ENCODE measurements at regions of chr1 and their contacts with region 1.

Region 1: DNA sequence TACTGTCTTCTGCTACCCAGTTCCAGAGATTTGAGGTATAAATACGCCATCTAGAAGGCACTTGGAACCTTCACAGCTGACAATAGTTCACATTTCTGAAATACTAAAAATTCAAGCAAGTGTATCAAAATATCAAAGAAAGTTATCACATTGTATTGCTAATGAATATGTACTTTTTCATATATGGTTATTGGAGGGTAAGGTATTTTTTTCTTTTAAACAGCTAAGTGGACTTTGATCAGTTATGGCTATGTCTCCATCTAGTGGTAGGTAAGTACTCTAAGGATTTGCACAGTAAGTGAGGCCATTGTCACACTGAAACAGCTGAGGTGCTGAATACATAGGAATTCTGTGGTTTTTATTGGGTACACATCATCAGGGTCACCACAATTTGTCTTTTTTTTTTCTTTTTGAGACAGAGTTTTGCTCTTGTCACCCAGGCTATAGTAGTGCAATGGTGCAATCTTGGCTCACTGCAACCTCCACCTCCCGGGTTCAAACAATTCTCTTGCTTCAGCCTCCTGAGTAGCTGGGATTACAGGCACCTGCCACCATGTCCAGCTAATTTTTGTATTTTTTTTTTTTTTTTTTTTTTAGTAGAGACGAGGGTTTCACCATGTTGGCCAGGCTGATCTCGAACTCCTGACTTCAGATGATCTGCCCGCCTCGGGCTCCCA is 49.1 kb upstream of the CR2 start:
- DNase-seq: no peak
- ATAC-seq: peak; percentile 86
- H3K4me3 Mint-ChIP-seq: no peak overlapping the region
- H3K27ac Mint-ChIP-seq: no peak overlapping the region
- H3K4me1 Mint-ChIP-seq: peaks cover 20% of the 10 kb centered on the region
- H3K27me3 Mint-ChIP-seq: peaks cover 5% of the 10 kb centered on the region
- CTCF ChIP-seq: peak; percentile 87

Region 2: DNA sequence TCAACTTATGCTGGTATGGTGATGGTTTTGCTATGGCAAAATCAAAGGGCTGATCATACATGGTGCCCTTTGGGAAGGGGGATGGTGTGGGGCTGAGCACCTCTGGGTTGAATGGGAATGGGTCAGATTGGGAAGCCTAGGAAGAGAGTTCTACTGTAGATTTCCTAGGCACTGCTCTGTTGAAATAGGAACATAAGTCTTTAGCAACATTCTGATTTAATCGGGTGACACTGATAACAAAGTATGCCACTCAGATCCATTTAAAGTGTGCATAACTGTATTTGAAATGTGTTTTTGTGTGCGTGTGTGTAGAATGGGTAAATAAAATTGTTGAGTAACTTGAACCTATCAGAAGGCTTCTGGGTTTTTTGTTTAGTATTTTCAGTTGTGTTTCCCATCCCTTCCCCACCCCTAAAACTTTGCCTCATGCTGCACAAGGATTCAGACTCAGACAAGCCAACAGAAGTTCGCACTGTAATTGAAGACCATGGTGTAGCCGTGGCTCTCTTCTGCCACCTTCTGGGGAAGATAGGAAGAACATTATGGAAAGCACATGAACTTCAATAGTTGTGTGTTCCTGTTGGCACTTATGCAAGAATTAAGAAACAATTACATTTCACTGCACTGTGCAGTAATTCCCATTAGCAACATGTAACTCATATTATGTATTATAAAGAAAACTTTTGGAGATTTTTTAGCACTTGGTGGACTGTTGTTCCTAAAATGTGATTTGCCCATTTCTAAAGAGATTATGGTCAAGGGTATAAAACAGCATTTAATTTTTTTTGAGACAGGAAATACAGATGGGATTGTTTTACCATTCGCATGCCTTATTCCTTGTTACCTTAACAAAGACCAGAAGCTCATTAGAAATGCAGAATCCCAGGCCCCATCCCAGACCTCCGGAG is 327.3 kb before region 1 on chr1:
- CTCF ChIA-PET with region 1: interaction called, 38 read pairs
- POLR2A ChIA-PET with region 1: interaction called, 3 read pairs
- intact Hi-C with region 1: no loop called
- DNase-seq: peak; percentile 76
- ATAC-seq: peak; percentile 98
- H3K4me3 Mint-ChIP-seq: no peak overlapping the region
- H3K27ac Mint-ChIP-seq: no peak overlapping the region
- H3K4me1 Mint-ChIP-seq: no peaks in the 10 kb centered on the region
- H3K27me3 Mint-ChIP-seq: no peaks in the 10 kb centered on the region
- CTCF ChIP-seq: peak; percentile 90

Region 3: DNA sequence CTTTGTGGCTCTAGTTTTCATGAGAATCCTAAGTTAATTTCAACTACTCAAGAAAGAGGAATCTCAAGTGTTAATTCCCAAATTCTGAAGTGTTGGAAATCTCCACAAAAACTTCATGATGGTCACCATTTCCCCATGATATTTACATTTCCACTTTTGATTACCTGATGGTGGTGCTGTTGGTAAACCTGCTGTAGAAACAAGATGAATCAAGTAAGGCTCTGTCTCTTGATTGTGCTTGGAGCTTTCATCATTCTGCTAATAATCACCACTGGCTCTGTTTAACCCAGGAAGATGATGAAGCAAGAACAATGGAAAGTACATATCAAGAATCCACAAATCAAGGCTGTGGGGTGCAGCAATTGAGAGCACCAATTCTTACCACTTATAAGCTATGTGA is 223.1 kb before region 1 on chr1:
- CTCF ChIA-PET with region 1: interaction called, 3 read pairs
- POLR2A ChIA-PET with region 1: no interaction called
- intact Hi-C with region 1: loop called (anchors 10 kb)
- DNase-seq: no peak
- ATAC-seq: no peak
- H3K4me3 Mint-ChIP-seq: no peak overlapping the region
- H3K27ac Mint-ChIP-seq: no peak overlapping the region
- H3K4me1 Mint-ChIP-seq: no peaks in the 10 kb centered on the region
- H3K27me3 Mint-ChIP-seq: peaks cover 2% of the 10 kb centered on the region
- CTCF ChIP-seq: no peak

Region 4: DNA sequence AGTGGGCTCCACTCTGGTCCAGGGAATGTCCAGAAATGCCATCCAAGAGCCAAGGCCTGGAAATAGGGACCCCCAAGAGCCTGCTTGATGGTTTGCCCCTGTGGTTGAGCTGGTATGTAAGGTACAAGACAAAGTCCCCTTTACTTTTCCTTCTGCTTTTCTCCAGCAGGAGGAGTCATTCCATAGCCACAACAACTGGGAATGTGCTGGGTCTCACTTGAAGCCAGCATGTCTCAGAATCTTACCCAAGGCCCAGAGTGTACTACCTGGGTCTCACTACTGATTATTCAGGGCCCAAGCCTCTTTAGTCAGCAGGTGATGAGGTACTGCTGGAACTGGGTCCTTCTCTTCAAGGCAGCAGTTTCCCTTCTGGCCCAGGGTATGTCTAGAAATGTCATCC is 145.6 kb before region 1 on chr1:
- CTCF ChIA-PET with region 1: no interaction called
- POLR2A ChIA-PET with region 1: no interaction called
- intact Hi-C with region 1: no loop called
- DNase-seq: no peak
- ATAC-seq: no peak
- H3K4me3 Mint-ChIP-seq: no peak overlapping the region
- H3K27ac Mint-ChIP-seq: no peak overlapping the region
- H3K4me1 Mint-ChIP-seq: no peaks in the 10 kb centered on the region
- H3K27me3 Mint-ChIP-seq: no peaks in the 10 kb centered on the region
- CTCF ChIP-seq: no peak

Region 5: DNA sequence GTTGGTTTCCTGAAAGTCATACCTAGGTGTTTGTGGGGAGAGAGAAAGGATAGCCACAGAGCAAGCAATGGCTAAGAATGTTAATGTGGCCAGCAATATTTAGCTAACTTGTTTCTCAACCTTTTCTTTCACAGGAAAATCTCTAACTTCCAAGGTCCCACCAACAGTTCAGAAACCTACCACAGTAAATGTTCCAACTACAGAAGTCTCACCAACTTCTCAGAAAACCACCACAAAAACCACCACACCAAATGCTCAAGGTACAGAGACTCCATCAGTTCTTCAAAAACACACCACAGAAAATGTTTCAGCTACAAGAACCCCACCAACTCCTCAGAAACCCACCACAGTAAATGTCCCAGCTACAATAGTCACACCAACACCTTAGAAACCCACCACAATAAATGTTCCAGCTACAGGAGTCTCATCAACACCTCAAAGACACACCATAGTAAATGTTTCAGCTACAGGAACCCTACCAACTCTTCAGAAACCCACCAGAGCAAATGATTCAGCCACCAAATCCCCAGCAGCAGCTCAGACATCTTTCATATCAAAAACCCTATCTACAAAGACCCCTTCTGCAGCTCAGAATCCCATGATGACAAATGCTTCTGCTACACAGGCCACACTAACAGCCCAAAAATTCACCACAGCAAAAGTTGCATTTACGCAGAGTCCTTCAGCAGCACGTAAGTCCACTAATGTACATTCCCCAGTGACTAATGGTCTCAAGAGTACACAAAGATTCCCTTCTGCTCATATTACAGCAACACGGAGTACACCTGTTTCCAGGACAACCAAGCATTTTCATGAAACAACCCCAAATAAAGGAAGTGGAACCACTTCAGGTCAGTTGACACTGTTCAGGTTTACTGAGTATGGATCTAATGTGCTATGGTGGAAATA is 68.2 kb before region 1 on chr1:
- CTCF ChIA-PET with region 1: interaction called, 22 read pairs
- POLR2A ChIA-PET with region 1: interaction called, 4 read pairs
- intact Hi-C with region 1: loop called (anchors 5 kb)
- DNase-seq: peak; percentile 81
- ATAC-seq: peak; percentile 75
- H3K4me3 Mint-ChIP-seq: peak overlapping the region; percentile 57
- H3K27ac Mint-ChIP-seq: peak overlapping the region; percentile 93
- H3K4me1 Mint-ChIP-seq: peaks cover 79% of the 10 kb centered on the region
- H3K27me3 Mint-ChIP-seq: peaks cover 3% of the 10 kb centered on the region
- CTCF ChIP-seq: no peak

Region 6: GRCh38 chr1:207470927-207471326 is 65.9 kb after region 1 on chr1:
- CTCF ChIA-PET with region 1: no interaction called
- POLR2A ChIA-PET with region 1: no interaction called
- intact Hi-C with region 1: no loop called
- DNase-seq: peak; percentile 34
- ATAC-seq: peak; percentile 98
- H3K4me3 Mint-ChIP-seq: no peak overlapping the region
- H3K27ac Mint-ChIP-seq: peak overlapping the region; percentile 47
- H3K4me1 Mint-ChIP-seq: peaks cover 20% of the 10 kb centered on the region
- H3K27me3 Mint-ChIP-seq: no peaks in the 10 kb centered on the region
- CTCF ChIP-seq: no peak

Region 7: GRCh38 chr1:207499573-207499972 is 94.6 kb after region 1 on chr1:
- CTCF ChIA-PET with region 1: interaction called, 15 read pairs
- POLR2A ChIA-PET with region 1: interaction called, 3 read pairs
- intact Hi-C with region 1: no loop called
- DNase-seq: peak; percentile 93
- ATAC-seq: peak; percentile 71
- H3K4me3 Mint-ChIP-seq: no peak overlapping the region
- H3K27ac Mint-ChIP-seq: peak overlapping the region; percentile 62
- H3K4me1 Mint-ChIP-seq: peaks cover 25% of the 10 kb centered on the region
- H3K27me3 Mint-ChIP-seq: peaks cover 14% of the 10 kb centered on the region
- CTCF ChIP-seq: peak; percentile 92

Region 8: DNA sequence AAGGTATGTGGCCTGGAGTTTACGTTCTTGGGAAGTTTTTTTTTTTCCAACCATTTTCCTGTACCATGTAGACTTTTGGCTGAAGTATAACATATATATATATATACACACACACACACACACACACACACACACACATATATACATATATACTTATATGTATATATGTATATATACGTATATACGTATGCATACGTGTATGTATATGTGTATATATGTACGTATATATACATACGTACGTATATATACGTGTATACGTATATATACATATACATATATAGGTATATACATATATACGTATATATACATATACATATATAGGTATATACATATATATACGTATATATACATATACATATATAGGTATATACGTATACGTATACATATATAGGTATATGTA is 109.9 kb after region 1 on chr1:
- CTCF ChIA-PET with region 1: no interaction called
- POLR2A ChIA-PET with region 1: no interaction called
- intact Hi-C with region 1: no loop called
- DNase-seq: no peak
- ATAC-seq: no peak
- H3K4me3 Mint-ChIP-seq: no peak overlapping the region
- H3K27ac Mint-ChIP-seq: no peak overlapping the region
- H3K4me1 Mint-ChIP-seq: no peaks in the 10 kb centered on the region
- H3K27me3 Mint-ChIP-seq: no peaks in the 10 kb centered on the region
- CTCF ChIP-seq: no peak

Region 9: DNA sequence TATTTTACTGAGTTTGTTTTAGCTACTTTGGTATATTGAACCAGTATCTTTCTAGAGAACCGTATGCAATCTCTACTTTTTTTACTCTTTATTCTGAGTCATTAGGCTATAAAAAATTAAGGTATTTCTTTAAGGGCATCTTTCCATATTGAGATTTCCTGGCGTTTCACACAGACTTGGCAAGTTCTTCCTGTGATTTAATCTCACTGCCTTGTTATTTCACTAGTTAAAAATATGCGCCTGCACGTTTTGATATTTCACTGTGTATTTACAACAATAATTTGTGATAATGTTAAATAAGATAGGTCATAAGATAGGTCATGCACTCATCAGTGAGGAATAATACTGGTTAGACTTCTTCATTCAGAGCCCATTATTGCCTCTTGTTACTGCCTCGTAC is 223.8 kb after region 1 on chr1:
- CTCF ChIA-PET with region 1: no interaction called
- POLR2A ChIA-PET with region 1: no interaction called
- intact Hi-C with region 1: no loop called
- DNase-seq: no peak
- ATAC-seq: no peak
- H3K4me3 Mint-ChIP-seq: no peak overlapping the region
- H3K27ac Mint-ChIP-seq: no peak overlapping the region
- H3K4me1 Mint-ChIP-seq: no peaks in the 10 kb centered on the region
- H3K27me3 Mint-ChIP-seq: no peaks in the 10 kb centered on the region
- CTCF ChIP-seq: no peak

Measured in activated CD8-positive, alpha-beta T cell treated with anti-CD3 and anti-CD28 coated beads for 36 hours (primary cell).